ENCODE measurements at regions of chr17 and their contacts with region 1.

Region 1: DNA sequence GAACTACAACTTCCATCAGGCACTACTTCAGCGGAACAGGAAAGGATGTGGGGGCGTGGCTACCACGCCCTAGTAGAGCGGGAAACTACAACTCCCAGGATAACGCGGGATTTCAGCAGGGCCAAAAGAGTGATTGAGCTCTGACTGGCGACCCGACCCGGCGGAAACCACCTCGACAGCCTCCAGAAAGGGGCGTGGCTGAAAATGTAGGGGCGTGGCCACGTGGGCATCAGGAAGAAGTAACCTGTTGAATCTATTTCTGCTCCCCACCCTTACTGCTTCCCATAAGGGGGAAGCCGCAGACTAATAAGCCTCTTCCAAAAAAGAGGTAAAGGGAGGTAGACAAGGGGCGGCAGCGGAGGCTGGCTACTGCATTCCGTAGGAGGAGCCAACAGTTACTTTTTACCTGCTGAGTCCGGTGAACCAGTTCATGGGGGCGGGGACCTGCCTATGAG is at the start of gene TMEM102:
- DNase-seq: peak; percentile 98 to 99 (median 99)
- H3K4me3 ChIP-seq: peak within 1 kb of the TSS; percentile 89
- H3K4me3 Mint-ChIP-seq: peak within 1 kb of the TSS; percentile 89 to 96 (median 94)
- H3K27ac ChIP-seq: peak within 1 kb of the TSS; percentile 86
- H3K27ac Mint-ChIP-seq: peak within 1 kb of the TSS; percentile 94 to 99 (median 97)
- H3K4me1 ChIP-seq: peaks cover 37% of the 10 kb centered on the region
- H3K4me1 Mint-ChIP-seq: peaks cover 22 to 47% (median 34%) of the 10 kb centered on the region in 4 donors
- H3K27me3 ChIP-seq: peaks cover 17% of the 10 kb centered on the region
- H3K27me3 Mint-ChIP-seq: peaks cover 9 to 10% of the 10 kb centered on the region in 2 donors
- total RNA-seq, gene TMEM102: 20.8 to 21.8 TPM

Region 2: GRCh38 chr17:7280519-7281429 is 154.5 kb before region 1 on chr17:
- CTCF ChIA-PET with region 1: no interaction called
- POLR2A ChIA-PET with region 1: interaction called, 3 read pairs
- intact Hi-C with region 1: loop called (anchors 1 kb)
- DNase-seq: peak; percentile 82 to 86 (median 85)
- H3K4me3 ChIP-seq: peak overlapping the region; percentile 23 to 58
- H3K4me3 Mint-ChIP-seq: peak overlapping the region; percentile 77 to 90 (median 82)
- H3K27ac ChIP-seq: peak overlapping the region; percentile 41
- H3K27ac Mint-ChIP-seq: peak overlapping the region; percentile 36 to 84 (median 66)
- H3K4me1 ChIP-seq: peaks cover 25% of the 10 kb centered on the region
- H3K4me1 Mint-ChIP-seq: peaks cover 4 to 28% (median 18%) of the 10 kb centered on the region in 4 donors
- H3K27me3 ChIP-seq: peaks cover 10% of the 10 kb centered on the region
- H3K27me3 Mint-ChIP-seq: peaks cover 15 to 19% of the 10 kb centered on the region in 2 donors

Region 3: DNA sequence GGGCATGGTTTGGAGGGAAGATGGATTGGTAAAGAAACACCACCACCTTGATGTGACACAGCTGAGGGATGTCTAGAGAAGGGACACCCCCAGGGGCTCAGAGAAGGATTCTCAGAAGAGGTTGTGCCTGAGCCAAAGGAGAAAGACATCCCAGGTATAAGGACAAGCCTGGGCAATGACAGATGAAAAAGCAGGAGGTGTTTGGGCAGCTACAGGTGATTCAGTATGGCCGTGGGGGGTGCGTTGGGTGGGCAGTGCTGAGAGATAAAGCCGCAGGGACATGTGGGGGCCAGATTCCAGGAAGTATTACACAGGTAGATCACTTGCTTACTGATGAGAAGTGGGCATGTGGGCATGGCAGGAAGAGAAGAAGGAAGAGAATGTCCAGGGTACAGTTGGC is 73.3 kb before region 1 on chr17:
- CTCF ChIA-PET with region 1: interaction called, 88 read pairs
- POLR2A ChIA-PET with region 1: interaction called, 50 read pairs
- intact Hi-C with region 1: no loop called
- DNase-seq: no peak
- H3K4me3 ChIP-seq: no peak overlapping the region
- H3K4me3 Mint-ChIP-seq: no peak overlapping the region
- H3K27ac ChIP-seq: no peak overlapping the region
- H3K27ac Mint-ChIP-seq: peak overlapping the region in 1 of 7 donors; percentile 68
- H3K4me1 ChIP-seq: no peaks in the 10 kb centered on the region
- H3K4me1 Mint-ChIP-seq: peaks cover 0 to 1% (median 0%) of the 10 kb centered on the region in 4 donors
- H3K27me3 ChIP-seq: no peaks in the 10 kb centered on the region
- H3K27me3 Mint-ChIP-seq: peaks cover 2% of the 10 kb centered on the region in 2 donors

Region 4: DNA sequence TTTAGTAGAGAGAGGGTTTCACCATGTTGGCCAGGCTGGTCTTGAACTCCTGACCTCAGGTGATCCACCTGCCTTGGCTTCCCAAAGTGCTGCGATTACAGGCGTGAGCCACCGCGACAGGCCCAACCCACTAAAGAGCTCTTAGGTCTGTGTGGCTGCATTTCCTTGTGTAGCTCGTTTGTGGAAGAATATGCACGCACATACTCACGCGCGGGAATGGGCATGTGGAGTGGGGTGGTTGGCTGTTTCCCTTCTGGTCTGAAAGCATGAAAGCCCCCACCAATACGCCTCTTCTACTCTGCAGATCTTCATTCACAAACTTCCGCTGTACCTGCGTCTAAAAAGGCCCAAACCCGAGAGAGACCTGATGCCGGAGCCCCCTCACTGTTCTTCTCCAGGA is 19.7 kb after region 1 on chr17:
- CTCF ChIA-PET with region 1: interaction called, 70 read pairs
- POLR2A ChIA-PET with region 1: interaction called, 89 read pairs
- intact Hi-C with region 1: loop called (anchors 1 kb)
- DNase-seq: no peak
- H3K4me3 ChIP-seq: peak overlapping the region; percentile 86 to 93
- H3K4me3 Mint-ChIP-seq: peak overlapping the region; percentile 92 to 100 (median 94)
- H3K27ac ChIP-seq: peak overlapping the region; percentile 73
- H3K27ac Mint-ChIP-seq: peak overlapping the region; percentile 88 to 98 (median 94)
- H3K4me1 ChIP-seq: peaks cover 23% of the 10 kb centered on the region
- H3K4me1 Mint-ChIP-seq: peaks cover 18 to 36% (median 22%) of the 10 kb centered on the region in 4 donors
- H3K27me3 ChIP-seq: no peaks in the 10 kb centered on the region
- H3K27me3 Mint-ChIP-seq: peaks cover 0 to 2% of the 10 kb centered on the region in 2 donors

Region 5: GRCh38 chr17:7502987-7503386 is 67.7 kb after region 1 on chr17:
- CTCF ChIA-PET with region 1: interaction called, 22 read pairs
- POLR2A ChIA-PET with region 1: no interaction called
- intact Hi-C with region 1: no loop called
- DNase-seq: no peak
- H3K4me3 ChIP-seq: no peak overlapping the region
- H3K4me3 Mint-ChIP-seq: no peak overlapping the region
- H3K27ac ChIP-seq: no peak overlapping the region
- H3K27ac Mint-ChIP-seq: peak overlapping the region in 3 of 7 donors; percentile 46 to 80 (median 50)
- H3K4me1 ChIP-seq: no peaks in the 10 kb centered on the region
- H3K4me1 Mint-ChIP-seq: peaks cover 0 to 2% (median 0%) of the 10 kb centered on the region in 4 donors
- H3K27me3 ChIP-seq: no peaks in the 10 kb centered on the region
- H3K27me3 Mint-ChIP-seq: no peaks in the 10 kb centered on the region

Region 6: DNA sequence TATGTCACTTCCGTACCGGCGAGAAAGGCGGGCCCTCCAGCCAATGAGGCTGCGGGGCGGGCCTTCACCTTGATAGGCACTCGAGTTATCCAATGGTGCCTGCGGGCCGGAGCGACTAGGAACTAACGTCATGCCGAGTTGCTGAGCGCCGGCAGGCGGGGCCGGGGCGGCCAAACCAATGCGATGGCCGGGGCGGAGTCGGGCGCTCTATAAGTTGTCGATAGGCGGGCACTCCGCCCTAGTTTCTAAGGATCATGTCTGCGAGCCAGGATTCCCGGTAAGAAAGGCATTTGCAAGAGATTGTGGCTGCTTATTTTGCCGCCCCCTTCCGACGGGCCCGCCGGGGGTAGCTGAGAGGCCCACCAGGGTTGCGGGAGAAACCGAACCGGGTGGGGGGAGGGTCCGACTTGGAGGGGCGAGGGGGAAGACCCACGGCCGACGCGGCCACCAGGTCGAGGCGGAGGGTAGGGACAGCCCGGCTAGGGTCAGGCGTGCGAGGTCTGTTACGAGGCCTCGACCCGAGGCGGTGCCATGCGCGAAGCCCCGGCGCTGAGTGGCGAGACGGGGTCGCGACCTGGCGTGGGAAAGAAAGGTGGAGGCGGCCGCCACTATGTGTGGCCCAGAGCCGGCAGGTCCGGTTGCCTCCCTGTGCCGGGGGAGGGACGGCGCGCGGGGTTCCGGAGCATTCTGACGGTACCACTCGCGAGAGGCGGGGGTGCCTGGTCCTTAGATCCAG is 137.5 kb after region 1 on chr17:
- CTCF ChIA-PET with region 1: interaction called, 5 read pairs
- POLR2A ChIA-PET with region 1: interaction called, 23 read pairs
- intact Hi-C with region 1: loop called (anchors 1 kb)
- DNase-seq: peak; percentile 100
- H3K4me3 ChIP-seq: peak overlapping the region; percentile 57 to 93
- H3K4me3 Mint-ChIP-seq: peak overlapping the region; percentile 94 to 100 (median 98)
- H3K27ac ChIP-seq: peak overlapping the region; percentile 97
- H3K27ac Mint-ChIP-seq: peak overlapping the region; percentile 98 to 100 (median 99)
- H3K4me1 ChIP-seq: peaks cover 44% of the 10 kb centered on the region
- H3K4me1 Mint-ChIP-seq: peaks cover 25 to 62% (median 41%) of the 10 kb centered on the region in 4 donors
- H3K27me3 ChIP-seq: no peaks in the 10 kb centered on the region
- H3K27me3 Mint-ChIP-seq: no peaks in the 10 kb centered on the region

Measured in CD4-positive, alpha-beta memory T cell (primary cell).